ENCODE measurements at regions of chr12 and their contacts with region 1.

Region 1: GRCh38 chr12:14723763-14724162 is 27.4 kb upstream of the GUCY2C start:
- DNase-seq: peak; percentile 33 to 84 (median 70)
- ATAC-seq: peak; percentile 72 to 92
- H3K4me3 ChIP-seq: no peak overlapping the region
- H3K27ac ChIP-seq: no peak overlapping the region
- H3K4me1 ChIP-seq: no peaks in the 10 kb centered on the region
- H3K27me3 ChIP-seq: no peaks in the 10 kb centered on the region

Region 2: GRCh38 chr12:13918897-13919296 is 804.9 kb before region 1 on chr12:
- intact Hi-C with region 1: no loop called
- DNase-seq: no peak
- ATAC-seq: no peak
- H3K4me3 ChIP-seq: no peak overlapping the region
- H3K27ac ChIP-seq: no peak overlapping the region
- H3K4me1 ChIP-seq: no peaks in the 10 kb centered on the region
- H3K27me3 ChIP-seq: no peaks in the 10 kb centered on the region

Region 3: DNA sequence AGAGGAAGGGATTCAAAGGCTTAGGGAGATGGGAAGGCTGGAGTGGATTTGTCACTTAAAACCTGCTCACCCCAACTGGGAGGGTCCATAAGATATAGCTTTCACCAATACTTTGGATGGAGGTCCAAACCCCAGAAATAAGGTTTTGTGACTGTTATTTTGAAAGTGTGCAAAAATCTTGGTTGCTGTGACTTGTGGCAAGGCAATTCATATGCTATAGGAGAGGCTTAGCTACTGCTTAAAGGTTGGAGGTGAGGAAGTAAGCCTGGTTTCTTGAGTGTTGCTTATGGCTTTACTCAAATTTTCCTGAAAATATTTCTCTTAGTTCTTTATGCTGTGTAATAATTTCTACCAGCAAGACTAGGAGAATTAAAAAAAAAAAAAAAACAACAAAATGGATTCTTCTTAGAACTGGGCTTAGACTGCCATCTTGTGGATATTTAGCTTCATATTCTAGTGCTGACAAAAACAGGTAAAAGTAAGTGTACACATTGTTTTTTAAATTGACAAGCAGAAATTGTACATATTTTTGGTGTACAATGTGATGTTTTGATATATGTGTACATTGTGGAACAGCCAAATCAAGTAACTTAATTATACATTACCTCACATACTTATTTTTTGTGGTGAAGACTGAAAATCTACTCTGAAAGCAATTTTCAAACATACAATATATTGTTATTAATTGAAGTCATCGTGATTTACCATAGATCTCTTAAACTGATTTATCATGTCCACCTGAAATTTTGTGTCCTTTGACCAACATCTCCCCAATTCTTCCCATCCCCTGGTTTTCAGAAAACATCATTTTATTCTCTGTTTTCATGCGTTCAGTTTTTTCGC is 272.0 kb after region 1 on chr12:
- intact Hi-C with region 1: loop called in 1 of 4 experiments (anchors 5 kb)
- DNase-seq: no peak
- ATAC-seq: no peak
- H3K4me3 ChIP-seq: no peak overlapping the region
- H3K27ac ChIP-seq: no peak overlapping the region
- H3K4me1 ChIP-seq: peaks cover 2% of the 10 kb centered on the region
- H3K27me3 ChIP-seq: no peaks in the 10 kb centered on the region

Region 4: DNA sequence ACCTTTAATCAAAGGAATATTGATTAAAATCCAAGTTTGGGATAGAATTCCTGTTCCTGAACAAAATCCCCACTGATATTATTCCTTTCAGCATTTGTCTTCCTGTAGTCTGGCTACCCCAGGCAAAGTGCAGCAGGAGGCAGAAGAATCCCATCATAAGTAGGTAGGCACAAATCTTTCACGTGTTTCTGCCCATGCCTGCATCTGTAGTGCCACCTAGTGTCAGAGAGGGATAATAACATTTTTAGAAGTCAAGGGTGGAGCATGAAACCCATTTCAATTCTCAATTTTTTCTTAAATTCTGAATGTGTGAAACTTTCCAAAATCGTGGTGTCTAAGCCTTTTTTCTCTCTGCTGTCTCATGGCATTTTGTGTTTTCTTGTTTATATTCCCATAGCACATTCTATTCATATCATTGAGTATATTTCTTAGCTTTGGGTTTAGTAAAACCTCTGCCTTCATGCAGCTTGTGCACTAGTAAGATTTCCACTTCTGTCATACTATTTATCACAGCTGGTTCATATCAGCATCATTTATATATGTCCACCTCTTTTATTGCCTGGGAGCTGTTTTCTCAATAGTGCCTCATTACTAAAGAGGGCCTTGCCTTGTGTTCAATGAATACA is 545.3 kb after region 1 on chr12:
- intact Hi-C with region 1: loop called in 1 of 4 experiments (anchors 5 kb)
- DNase-seq: peak in 2 of 3 donors; percentile 24 to 41
- ATAC-seq: peak in 1 of 2 donors; percentile 54
- H3K4me3 ChIP-seq: no peak overlapping the region
- H3K27ac ChIP-seq: no peak overlapping the region
- H3K4me1 ChIP-seq: no peaks in the 10 kb centered on the region
- H3K27me3 ChIP-seq: no peaks in the 10 kb centered on the region